ENCODE measurements at regions of chr1 and their contacts with region 1.

Region 1: GRCh38 chr1:224922404-224923164 is 6.9 kb upstream of the DNAH14 start:
- DNase-seq: no peak
- H3K4me3 ChIP-seq: no peak overlapping the region
- H3K27ac ChIP-seq: no peak overlapping the region
- H3K4me1 ChIP-seq: no peaks in the 10 kb centered on the region
- H3K27me3 ChIP-seq: no peaks in the 10 kb centered on the region
- CTCF ChIP-seq: peak; percentile 11 to 60 (median 49)
- POLR2A ChIP-seq: no peak

Region 2: DNA sequence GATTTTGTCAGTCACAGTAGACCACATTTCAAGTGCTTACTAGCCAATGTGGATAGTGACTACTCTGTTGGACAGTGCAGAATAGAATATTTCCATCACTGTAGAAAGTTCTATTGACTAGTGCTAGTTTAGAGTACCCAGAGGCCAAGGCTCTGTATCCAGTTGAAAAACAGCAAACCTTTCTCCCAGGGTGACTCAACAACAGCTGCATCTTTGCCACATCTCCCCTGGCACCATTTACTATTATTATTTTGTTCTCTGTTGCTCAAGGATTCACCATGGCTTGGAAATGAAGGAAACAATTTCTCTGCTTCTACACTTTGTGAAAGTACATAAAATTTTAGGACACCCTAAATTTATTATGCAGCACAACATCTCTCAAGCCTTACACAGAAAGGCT is 402.7 kb before region 1 on chr1:
- intact Hi-C with region 1: loop called (anchors 5 kb)
- DNase-seq: no peak
- H3K4me3 ChIP-seq: no peak overlapping the region
- H3K27ac ChIP-seq: no peak overlapping the region
- H3K4me1 ChIP-seq: no peaks in the 10 kb centered on the region
- H3K27me3 ChIP-seq: no peaks in the 10 kb centered on the region
- CTCF ChIP-seq: no peak
- POLR2A ChIP-seq: no peak

Region 3: DNA sequence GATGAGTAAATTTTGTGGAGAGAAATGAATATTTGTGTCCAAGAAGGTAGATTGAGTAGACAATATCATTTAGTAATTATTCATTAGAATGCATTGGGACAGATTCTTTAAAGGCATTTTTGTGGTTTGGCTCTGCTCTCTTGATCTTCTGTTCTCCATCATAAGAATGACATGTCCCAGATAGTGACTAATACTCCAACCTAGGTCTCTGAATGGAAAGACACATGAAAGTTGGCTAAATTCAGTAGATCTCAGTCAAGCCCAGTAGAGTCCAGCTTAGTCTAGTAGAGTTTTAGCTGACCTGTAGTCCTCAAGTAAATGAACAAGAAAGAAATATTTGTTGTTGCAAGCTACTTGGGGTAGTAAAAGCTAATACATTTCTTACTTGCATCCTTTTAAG is 54.9 kb before region 1 on chr1:
- intact Hi-C with region 1: no loop called
- DNase-seq: no peak
- H3K4me3 ChIP-seq: no peak overlapping the region
- H3K27ac ChIP-seq: no peak overlapping the region
- H3K4me1 ChIP-seq: no peaks in the 10 kb centered on the region
- H3K27me3 ChIP-seq: peaks cover 0 to 6% (median 0%) of the 10 kb centered on the region in 7 donors
- CTCF ChIP-seq: no peak
- POLR2A ChIP-seq: no peak

Region 4: GRCh38 chr1:224879162-224879803 is 43.3 kb before region 1 on chr1:
- intact Hi-C with region 1: no loop called
- DNase-seq: no peak
- H3K4me3 ChIP-seq: no peak overlapping the region
- H3K27ac ChIP-seq: no peak overlapping the region
- H3K4me1 ChIP-seq: no peaks in the 10 kb centered on the region
- H3K27me3 ChIP-seq: peaks cover 0 to 43% (median 0%) of the 10 kb centered on the region in 7 donors
- CTCF ChIP-seq: no peak
- POLR2A ChIP-seq: no peak

Measured in spleen (tissue), 13 donors.